Gastrocnemius medialis (tissue), 4 donors: ENCODE measurements at regions of chr7 and their contacts with region 1.

Region 1: GRCh38 chr7:113873554-113874151 is 45.2 kb downstream of the PPP1R3A start:
- DNase-seq: no peak
- ATAC-seq: peak; percentile 90 to 92
- H3K4me3 ChIP-seq: peak overlapping the region; percentile 27 to 44 (median 35)
- H3K27ac ChIP-seq: peak overlapping the region; percentile 77 to 88 (median 85)
- H3K4me1 ChIP-seq: peaks cover 10 to 44% of the 10 kb centered on the region in 2 donors
- H3K27me3 ChIP-seq: no peaks in the 10 kb centered on the region
- CTCF ChIP-seq: no peak
- POLR2A ChIP-seq: no peak

Region 2: GRCh38 chr7:113824117-113824823 is 49.4 kb before region 1 on chr7:
- in situ Hi-C with region 1: no loop called
- intact Hi-C with region 1: loop called (anchors 2 kb)
- DNase-seq: peak; percentile 3 to 46
- ATAC-seq: peak; percentile 96 to 99
- H3K4me3 ChIP-seq: peak overlapping the region in 2 of 4 donors; percentile 9 to 13
- H3K27ac ChIP-seq: peak overlapping the region; percentile 65 to 78 (median 74)
- H3K4me1 ChIP-seq: peaks cover 27 to 29% of the 10 kb centered on the region in 2 donors
- H3K27me3 ChIP-seq: no peaks in the 10 kb centered on the region
- CTCF ChIP-seq: no peak
- POLR2A ChIP-seq: no peak

Region 3: GRCh38 chr7:113955157-113955556 is 81.5 kb after region 1 on chr7:
- in situ Hi-C with region 1: no loop called
- intact Hi-C with region 1: no loop called
- DNase-seq: no peak
- ATAC-seq: no peak
- H3K4me3 ChIP-seq: no peak overlapping the region
- H3K27ac ChIP-seq: no peak overlapping the region
- H3K4me1 ChIP-seq: no peaks in the 10 kb centered on the region
- H3K27me3 ChIP-seq: peaks cover 0 to 3% (median 0%) of the 10 kb centered on the region in 3 donors
- CTCF ChIP-seq: no peak
- POLR2A ChIP-seq: no peak

Region 4: DNA sequence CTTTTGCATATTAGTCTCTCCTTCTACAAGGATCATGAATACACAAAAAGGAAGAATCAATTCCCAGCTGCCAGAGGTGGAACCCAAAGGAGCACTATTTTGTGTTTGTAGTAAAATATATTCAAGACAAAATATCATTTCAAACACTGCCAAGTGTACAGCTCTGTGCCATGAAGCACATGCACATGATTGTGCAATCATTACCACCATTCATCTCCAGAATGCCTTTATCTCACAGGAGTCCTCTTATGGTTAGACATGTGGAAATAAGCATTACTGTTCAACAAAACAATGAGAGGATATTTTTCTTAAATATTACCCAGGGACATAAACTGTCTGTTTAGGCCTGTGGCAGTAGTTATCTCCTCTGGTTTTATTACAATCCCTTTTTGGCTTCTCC is 196.6 kb after region 1 on chr7:
- in situ Hi-C with region 1: no loop called
- intact Hi-C with region 1: no loop called
- DNase-seq: no peak
- ATAC-seq: no peak
- H3K4me3 ChIP-seq: no peak overlapping the region
- H3K27ac ChIP-seq: no peak overlapping the region
- H3K4me1 ChIP-seq: no peaks in the 10 kb centered on the region
- H3K27me3 ChIP-seq: no peaks in the 10 kb centered on the region
- CTCF ChIP-seq: no peak
- POLR2A ChIP-seq: no peak